ENCODE measurements at regions of chr16 and their contacts with region 1.

Region 1: DNA sequence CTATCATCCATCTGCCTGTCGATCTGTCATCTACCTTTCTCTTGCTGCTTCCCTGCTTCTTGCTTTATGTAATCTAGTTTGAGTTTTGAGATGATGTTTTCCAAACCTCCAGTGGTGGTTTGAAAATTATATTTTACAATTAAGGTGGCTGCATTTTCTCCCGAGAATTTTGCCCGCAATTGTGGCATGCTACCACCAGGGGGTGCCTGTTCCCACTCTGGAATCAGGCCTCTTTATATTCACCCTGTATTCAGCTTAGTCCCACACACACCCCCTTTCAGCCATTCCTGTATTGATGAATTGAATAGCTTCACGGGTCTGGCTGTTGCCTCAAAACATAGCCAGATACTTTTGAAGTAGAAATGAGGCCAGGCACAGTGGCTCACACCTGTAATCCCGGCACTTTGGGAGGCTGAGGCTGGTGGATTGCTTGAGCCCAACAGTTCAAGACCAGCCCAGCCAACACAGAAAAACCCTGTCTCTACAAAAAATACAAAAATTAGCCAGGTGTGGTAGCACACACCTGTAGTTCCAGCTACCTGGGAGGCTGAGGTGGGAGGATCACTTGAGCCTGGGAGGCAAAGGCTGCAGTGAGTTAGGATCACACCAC is 3.2 kb downstream of the PRSS22 start:
- DNase-seq: no peak
- H3K4me3 ChIP-seq: peak overlapping the region; percentile 27; the same call in 1 of the 2 replicates
- H3K27ac ChIP-seq: no peak overlapping the region
- H3K4me1 ChIP-seq: peaks cover 40% of the 10 kb centered on the region
- H3K27me3 ChIP-seq: no peaks in the 10 kb centered on the region
- CTCF ChIP-seq: peak; percentile 96

Region 2: GRCh38 chr16:2799866-2800239 is 55.0 kb before region 1 on chr16:
- CTCF ChIA-PET with region 1: interaction called, 4 read pairs
- POLR2A ChIA-PET with region 1: interaction called, 21 read pairs
- intact Hi-C with region 1: no loop called
- DNase-seq: peak in 1 of 2 experiments; percentile 87
- H3K4me3 ChIP-seq: no peak overlapping the region
- H3K27ac ChIP-seq: peak overlapping the region; percentile 27
- H3K4me1 ChIP-seq: peaks cover 36% of the 10 kb centered on the region
- H3K27me3 ChIP-seq: no peaks in the 10 kb centered on the region
- CTCF ChIP-seq: no peak

Region 3: GRCh38 chr16:2829501-2830356 is 25.1 kb before region 1 on chr16 and contains the start of gene ZG16B:
- CTCF ChIA-PET with region 1: interaction called, 4 read pairs
- POLR2A ChIA-PET with region 1: interaction called, 3 read pairs
- intact Hi-C with region 1: loop called (anchors 1 kb)
- DNase-seq: peak; percentile 77
- H3K4me3 ChIP-seq: no peak within 1 kb of the TSS
- H3K27ac ChIP-seq: peak within 1 kb of the TSS; percentile 53; the same call in 1 of the 2 replicates
- H3K4me1 ChIP-seq: peaks cover 14% of the 10 kb centered on the region
- H3K27me3 ChIP-seq: no peaks in the 10 kb centered on the region
- CTCF ChIP-seq: no peak
- total RNA-seq, gene ZG16B: 19.9 and 23.4 TPM in 2 replicates

Region 4: DNA sequence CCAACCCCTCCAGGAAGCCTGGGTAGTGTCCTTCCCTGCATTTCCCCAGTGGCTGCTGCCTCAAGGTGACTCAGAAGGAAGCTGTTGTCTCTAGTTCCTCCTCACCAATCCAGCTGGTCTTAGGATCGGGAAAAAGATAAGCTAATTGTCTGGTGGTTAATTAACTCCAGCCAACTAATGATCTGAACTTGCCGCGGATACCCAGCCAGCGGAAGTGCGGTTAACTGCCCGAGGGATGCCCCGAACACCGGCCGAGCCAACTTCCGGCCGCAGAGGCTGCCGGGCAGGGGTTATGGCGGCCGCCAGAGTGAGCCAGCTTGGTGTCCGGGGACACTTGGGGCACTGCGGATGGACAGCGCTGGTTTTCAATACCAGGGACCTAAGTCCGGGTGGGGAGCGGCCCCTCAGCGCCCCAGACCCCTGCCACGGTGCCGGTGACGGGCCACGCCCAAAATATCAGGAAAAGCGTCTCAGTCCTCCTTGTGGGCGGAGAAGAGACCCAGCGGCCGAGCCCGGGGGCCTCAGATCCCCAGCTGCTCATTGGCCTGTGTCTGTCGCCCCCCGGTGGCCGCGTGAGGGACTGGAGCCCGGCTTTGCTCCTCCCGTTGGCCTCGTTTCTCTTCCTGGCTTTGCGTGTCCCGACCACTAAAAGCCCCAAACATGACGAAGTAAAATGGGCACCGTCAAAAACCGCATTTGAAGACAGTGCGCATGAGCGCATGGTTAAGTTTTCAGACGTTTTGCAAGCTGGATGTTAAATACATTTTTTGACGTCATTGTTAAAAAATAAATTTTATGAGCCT is 13.4 kb after region 1 on chr16:
- CTCF ChIA-PET with region 1: interaction called, 10 read pairs
- POLR2A ChIA-PET with region 1: no interaction called
- intact Hi-C with region 1: no loop called
- DNase-seq: peak; percentile 84 to 97
- H3K4me3 ChIP-seq: peak overlapping the region; percentile 79
- H3K27ac ChIP-seq: peak overlapping the region; percentile 94
- H3K4me1 ChIP-seq: peaks cover 11% of the 10 kb centered on the region; the same call in 1 of the 2 replicates
- H3K27me3 ChIP-seq: no peaks in the 10 kb centered on the region
- CTCF ChIP-seq: peak; percentile 92

Region 5: DNA sequence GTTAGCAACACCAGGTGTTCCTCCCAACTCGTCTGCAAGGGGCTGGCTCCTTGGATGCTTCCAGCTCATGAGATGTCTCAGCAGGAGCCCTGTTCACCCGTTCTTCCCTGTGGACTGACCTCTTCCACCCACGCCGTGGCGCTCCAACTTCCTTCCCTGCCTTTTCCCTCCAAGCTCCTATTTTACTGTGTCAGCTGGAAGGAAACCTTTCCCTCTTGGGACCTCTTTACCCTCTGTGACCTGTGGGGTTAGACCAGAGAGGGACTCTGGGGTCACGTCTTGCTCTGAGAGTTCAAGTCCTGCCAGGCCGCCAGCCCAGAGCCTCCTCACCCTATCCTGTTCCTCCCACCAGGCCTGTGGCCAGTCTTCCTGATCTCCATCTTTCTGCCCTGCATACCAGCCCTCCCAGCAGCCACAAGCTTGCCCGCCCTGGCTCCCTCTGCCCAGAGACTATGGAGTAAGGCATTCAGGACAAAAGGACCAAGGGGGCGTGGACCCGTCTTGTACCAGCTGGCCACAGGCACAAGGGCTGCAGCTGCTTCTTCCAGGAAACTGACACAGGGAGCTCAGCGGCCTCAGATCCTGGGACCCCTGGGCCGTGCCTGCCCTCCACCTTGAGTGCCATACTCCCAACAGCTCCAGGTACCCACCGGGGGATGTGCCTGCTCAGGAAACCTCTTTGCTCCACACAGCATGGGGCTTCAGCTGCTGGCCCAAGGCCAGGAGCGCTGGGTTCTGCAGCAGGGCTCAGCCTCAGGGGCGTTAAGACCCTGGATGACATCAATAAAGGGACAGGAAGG is 117.4 kb after region 1 on chr16:
- CTCF ChIA-PET with region 1: no interaction called
- POLR2A ChIA-PET with region 1: no interaction called
- intact Hi-C with region 1: no loop called
- DNase-seq: no peak
- H3K4me3 ChIP-seq: no peak overlapping the region
- H3K27ac ChIP-seq: no peak overlapping the region
- H3K4me1 ChIP-seq: no peaks in the 10 kb centered on the region; the same call in 1 of the 2 replicates
- H3K27me3 ChIP-seq: no peaks in the 10 kb centered on the region
- CTCF ChIP-seq: no peak